Aorta (tissue), 5 donors: ENCODE measurements at regions of chr4 and their contacts with region 1.

Region 1: DNA sequence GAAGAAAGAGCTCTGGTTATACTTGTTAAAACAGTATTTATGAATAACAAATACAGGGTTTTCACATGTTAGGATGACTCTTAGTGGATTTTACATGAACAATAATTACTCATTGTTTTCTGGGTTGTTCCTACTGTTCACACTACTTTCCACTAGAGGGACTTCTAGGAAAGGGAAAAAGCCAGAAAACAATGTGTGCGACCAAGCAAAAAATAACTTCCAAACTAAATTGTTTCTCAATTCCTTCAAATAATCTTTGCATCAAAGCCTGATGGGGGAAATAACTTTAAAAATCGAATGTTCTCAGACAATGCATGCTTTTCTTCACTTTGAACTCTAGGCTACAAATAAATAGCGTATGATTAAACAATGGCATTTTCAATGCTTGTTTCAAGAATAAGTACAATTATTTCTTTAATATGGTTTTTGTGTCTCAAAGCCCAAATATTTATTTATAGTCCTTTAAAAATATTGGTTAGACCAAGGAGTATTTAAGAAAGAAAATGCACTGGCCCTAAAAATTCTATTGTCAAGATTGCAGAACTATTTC is 72.1 kb upstream of the ETNPPL start:
- DNase-seq: no peak
- ATAC-seq: no peak
- H3K4me3 ChIP-seq: no peak overlapping the region
- H3K27ac ChIP-seq: no peak overlapping the region
- H3K4me1 ChIP-seq: no peaks in the 10 kb centered on the region
- H3K27me3 ChIP-seq: no peaks in the 10 kb centered on the region

Region 2: GRCh38 chr4:108466936-108467902 is 367.7 kb before region 1 on chr4:
- intact Hi-C with region 1: loop called in 1 of 2 experiments (anchors 5 kb)
- DNase-seq: no peak
- ATAC-seq: no peak
- H3K4me3 ChIP-seq: no peak overlapping the region
- H3K27ac ChIP-seq: no peak overlapping the region
- H3K4me1 ChIP-seq: no peaks in the 10 kb centered on the region
- H3K27me3 ChIP-seq: no peaks in the 10 kb centered on the region

Region 3: DNA sequence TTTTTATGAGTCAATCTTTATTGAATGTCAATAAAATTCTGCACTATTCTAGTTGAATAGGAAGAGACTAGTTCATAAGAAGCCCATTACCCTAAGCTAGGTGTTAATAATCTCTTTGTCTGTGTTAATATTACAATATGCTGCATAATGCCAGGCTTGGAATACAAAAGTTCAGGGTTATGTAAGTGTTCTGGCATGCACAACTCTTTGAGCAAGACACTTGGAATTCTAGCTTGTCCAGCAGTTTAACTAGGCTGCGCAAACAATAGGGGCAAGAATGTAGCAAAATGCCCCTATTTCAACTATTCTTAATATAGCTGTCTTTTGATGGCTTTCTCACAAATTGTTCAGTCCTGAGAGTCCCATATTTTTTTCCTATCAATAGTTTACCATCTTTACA is 40.8 kb before region 1 on chr4:
- intact Hi-C with region 1: no loop called
- DNase-seq: no peak
- ATAC-seq: peak; percentile 51
- H3K4me3 ChIP-seq: no peak overlapping the region
- H3K27ac ChIP-seq: no peak overlapping the region
- H3K4me1 ChIP-seq: no peaks in the 10 kb centered on the region
- H3K27me3 ChIP-seq: no peaks in the 10 kb centered on the region

Region 4: GRCh38 chr4:109302361-109303139 is 467.6 kb after region 1 on chr4 and contains the start of gene COL25A1:
- intact Hi-C with region 1: loop called in 1 of 2 experiments (anchors 10 kb)
- DNase-seq: peak; percentile 52 to 85
- ATAC-seq: peak; percentile 69
- H3K4me3 ChIP-seq: peak within 1 kb of the TSS; percentile 7 to 42
- H3K27ac ChIP-seq: no peak within 1 kb of the TSS
- H3K4me1 ChIP-seq: no peaks in the 10 kb centered on the region
- H3K27me3 ChIP-seq: no peaks in the 10 kb centered on the region
- total RNA-seq, gene COL25A1: 2.2 to 8.1 TPM

Region 5: DNA sequence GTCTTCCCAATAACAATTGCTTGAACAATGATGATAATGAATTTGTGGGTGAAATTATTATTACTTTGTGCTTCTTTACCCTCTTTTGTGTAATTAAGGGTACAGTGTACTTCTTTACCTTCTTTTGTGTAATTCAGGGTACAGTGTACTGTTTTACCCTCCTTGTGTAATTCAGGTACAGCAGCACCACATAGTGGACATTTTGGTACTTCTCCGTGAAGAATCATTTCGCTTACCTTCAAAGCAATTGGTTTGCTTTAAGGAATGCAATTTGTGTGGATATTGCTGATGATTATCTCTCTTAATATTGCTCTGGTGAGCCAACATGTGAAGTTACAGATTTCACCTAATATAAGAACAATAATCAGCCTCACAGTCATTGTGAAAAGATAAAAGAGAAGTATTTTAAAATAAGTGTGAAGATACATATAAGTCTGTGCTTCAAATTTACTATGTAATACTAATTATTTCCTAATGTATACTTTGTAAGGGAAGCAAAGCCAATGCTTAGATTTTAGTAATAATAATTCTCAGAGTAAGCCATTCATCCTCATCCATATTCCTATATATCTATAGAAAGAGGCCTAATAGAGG is 571.5 kb after region 1 on chr4:
- intact Hi-C with region 1: loop called (anchors 2 kb)
- DNase-seq: no peak
- ATAC-seq: peak; percentile 63
- H3K4me3 ChIP-seq: no peak overlapping the region
- H3K27ac ChIP-seq: no peak overlapping the region
- H3K4me1 ChIP-seq: no peaks in the 10 kb centered on the region
- H3K27me3 ChIP-seq: no peaks in the 10 kb centered on the region